ENCODE measurements at regions of chr6 and their contacts with region 1.

Region 1: DNA sequence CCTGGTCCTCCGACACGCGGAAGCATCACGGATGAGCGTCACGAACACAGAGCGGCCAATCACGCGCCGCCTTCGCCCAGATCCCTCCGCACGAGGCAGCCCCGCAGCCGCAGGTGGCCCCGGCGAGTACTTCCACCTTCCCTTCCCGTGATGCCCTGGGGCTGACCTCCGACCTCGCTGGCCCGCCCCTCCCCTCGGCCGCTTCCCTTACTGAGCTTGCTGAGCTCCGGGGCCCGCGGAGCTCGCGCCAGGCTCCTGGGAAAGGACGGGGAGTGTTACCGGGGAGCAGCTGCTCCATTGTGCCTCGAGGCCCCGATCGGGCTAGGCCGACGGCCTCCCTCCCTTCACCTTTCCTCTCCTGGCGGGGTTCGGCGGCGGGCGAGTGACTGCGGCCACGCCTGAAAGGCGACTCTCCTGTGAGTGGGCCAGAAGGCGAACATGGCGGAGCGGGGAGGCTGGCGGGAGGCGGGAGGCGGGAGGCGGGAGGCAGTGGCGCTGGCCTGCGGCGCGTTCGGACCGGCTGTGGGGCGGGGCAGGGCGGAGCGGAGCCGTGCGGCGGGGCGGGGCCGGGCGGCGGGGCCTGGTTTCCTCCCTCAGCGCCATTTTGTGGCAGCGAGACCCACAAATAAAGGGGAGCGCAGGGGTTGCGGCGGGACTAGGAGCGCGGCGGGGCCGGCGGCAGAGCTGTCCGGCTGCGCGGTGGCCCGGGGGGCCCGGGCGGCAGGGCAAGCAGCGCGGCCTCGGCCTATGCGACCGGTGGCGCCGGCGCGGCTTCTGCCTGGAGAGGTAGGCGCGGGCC is at the start of gene WTAP:
- DNase-seq: peak; percentile 98
- H3K4me3 Mint-ChIP-seq: peak within 1 kb of the TSS; percentile 95
- H3K27ac Mint-ChIP-seq: peak within 1 kb of the TSS; percentile 98
- H3K4me1 Mint-ChIP-seq: peaks cover 47% of the 10 kb centered on the region
- H3K27me3 Mint-ChIP-seq: no peaks in the 10 kb centered on the region
- total RNA-seq, gene WTAP: 87.6 to 90.2 TPM

Region 2: GRCh38 chr6:159739341-159739740 is 12.2 kb after region 1 on chr6:
- CTCF ChIA-PET with region 1: interaction called, 5 read pairs
- POLR2A ChIA-PET with region 1: interaction called, 14 read pairs
- intact Hi-C with region 1: no loop called
- DNase-seq: no peak
- H3K4me3 Mint-ChIP-seq: no peak overlapping the region
- H3K27ac Mint-ChIP-seq: no peak overlapping the region
- H3K4me1 Mint-ChIP-seq: peaks cover 23% of the 10 kb centered on the region
- H3K27me3 Mint-ChIP-seq: no peaks in the 10 kb centered on the region

Region 3: DNA sequence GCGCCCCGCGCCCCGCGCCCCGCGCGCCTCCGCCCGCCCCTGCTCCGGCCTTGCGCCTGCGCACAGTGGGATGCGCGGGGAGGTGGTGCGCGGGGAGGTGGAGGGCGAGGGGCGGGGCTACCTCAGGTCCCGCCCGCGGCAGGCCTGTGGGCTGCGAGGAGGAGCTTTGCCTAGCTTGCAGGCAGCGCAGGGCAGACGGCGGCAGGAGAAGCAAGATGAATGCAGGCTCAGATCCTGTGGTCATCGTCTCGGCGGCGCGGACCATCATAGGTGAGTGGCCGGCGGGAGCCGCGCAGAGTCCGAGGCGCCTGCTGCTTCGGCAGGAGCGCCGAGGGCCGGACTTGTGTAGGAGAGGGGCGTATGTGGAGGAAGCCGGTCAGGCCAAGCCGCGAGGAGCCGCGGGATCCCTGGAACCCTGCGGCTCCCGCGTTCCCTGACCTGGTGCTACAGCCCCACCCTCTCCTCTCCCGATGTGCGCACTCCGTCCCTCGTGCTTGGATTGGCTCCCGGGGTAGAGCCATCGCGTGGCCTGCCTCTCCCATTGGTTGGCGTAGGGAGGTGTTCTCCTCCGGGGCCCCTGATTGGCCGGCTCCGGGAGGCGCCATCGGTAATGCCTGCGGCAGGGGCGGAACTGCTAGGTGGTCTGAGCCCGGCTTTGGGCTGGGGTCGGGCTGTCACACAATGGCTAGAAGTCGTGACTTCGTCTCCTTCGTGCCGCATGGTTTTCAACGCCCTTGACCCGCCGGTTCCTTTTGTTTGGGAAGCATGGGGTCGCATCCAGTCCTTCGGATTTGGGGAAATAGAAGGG is 35.0 kb after region 1 on chr6 and contains the start of gene ACAT2:
- CTCF ChIA-PET with region 1: interaction called, 4 read pairs
- POLR2A ChIA-PET with region 1: interaction called, 9 read pairs
- intact Hi-C with region 1: loop called (anchors 1 kb)
- DNase-seq: peak; percentile 97
- H3K4me3 Mint-ChIP-seq: peak within 1 kb of the TSS; percentile 98
- H3K27ac Mint-ChIP-seq: peak within 1 kb of the TSS; percentile 98
- H3K4me1 Mint-ChIP-seq: peaks cover 45% of the 10 kb centered on the region
- H3K27me3 Mint-ChIP-seq: no peaks in the 10 kb centered on the region
- total RNA-seq, gene ACAT2: 115 to 116 TPM

Region 4: DNA sequence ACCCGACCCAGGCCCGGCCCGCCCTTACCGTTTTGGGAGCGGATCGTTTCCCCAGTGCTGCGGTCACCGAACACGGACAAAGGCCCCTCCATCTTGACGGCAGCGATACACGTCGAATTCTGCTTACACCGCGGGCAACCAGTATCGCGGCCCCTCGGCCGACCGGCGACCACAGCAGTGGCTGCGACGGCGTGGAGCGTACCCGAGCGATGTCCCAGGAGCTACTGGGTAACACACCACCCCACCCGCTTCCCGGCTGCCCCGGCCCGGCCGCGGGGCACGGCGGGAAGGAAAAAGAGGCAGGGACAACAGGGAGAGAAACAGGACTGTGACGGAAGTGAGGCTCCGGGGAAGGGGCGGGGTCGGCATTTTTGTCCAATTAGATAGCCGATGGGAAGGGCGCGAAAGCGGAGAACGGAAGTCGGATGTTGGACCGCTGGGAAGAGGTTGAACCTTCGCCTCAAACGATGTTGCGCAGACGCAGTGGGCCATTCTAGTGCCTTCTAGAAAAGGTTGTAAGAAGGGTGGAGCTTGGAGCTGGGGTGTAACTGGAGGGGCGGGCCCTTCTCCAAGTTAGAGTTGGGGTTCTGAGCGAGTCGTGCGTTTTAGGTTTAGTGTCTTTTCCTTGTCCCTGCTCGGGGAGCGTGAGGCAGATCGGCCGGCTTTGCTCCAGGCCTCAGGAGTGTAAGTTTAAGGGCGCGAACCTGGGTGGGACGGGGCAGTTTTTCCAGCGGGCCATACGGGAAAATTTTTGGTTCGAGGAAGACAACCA is 62.4 kb after region 1 on chr6 and contains the start of gene TCP1:
- CTCF ChIA-PET with region 1: interaction called, 3 read pairs
- POLR2A ChIA-PET with region 1: interaction called, 90 read pairs
- intact Hi-C with region 1: loop called (anchors 1 kb)
- DNase-seq: peak; percentile 100
- H3K4me3 Mint-ChIP-seq: peak within 1 kb of the TSS; percentile 96
- H3K27ac Mint-ChIP-seq: peak within 1 kb of the TSS; percentile 98
- H3K4me1 Mint-ChIP-seq: peaks cover 64% of the 10 kb centered on the region
- H3K27me3 Mint-ChIP-seq: no peaks in the 10 kb centered on the region
- total RNA-seq, gene TCP1: 429 to 438 TPM

Region 5: GRCh38 chr6:159968440-159969203 is 241.5 kb after region 1 on chr6 and contains the start of gene IGF2R:
- CTCF ChIA-PET with region 1: no interaction called
- POLR2A ChIA-PET with region 1: interaction called, 3 read pairs
- intact Hi-C with region 1: loop called (anchors 1 kb)
- DNase-seq: peak; percentile 95
- H3K4me3 Mint-ChIP-seq: peak within 1 kb of the TSS; percentile 92
- H3K27ac Mint-ChIP-seq: peak within 1 kb of the TSS; percentile 92
- H3K4me1 Mint-ChIP-seq: peaks cover 40% of the 10 kb centered on the region
- H3K27me3 Mint-ChIP-seq: no peaks in the 10 kb centered on the region
- total RNA-seq, gene IGF2R: 73.5 to 75.5 TPM

Region 6: GRCh38 chr6:160462551-160463109 is 735.5 kb after region 1 on chr6:
- CTCF ChIA-PET with region 1: no interaction called
- POLR2A ChIA-PET with region 1: no interaction called
- intact Hi-C with region 1: loop called (anchors 5 kb)
- DNase-seq: peak; percentile 64
- H3K4me3 Mint-ChIP-seq: peak overlapping the region; percentile 42
- H3K27ac Mint-ChIP-seq: peak overlapping the region; percentile 68
- H3K4me1 Mint-ChIP-seq: peaks cover 72% of the 10 kb centered on the region
- H3K27me3 Mint-ChIP-seq: peaks cover 14% of the 10 kb centered on the region